Activated CD4-positive, alpha-beta T cell treated with anti-CD3 and anti-CD28 coated beads for 36 hours (primary cell): ENCODE measurements at regions of chr20 and their contacts with region 1.

Region 1: GRCh38 chr20:35490736-35491181 is 35.4 kb downstream of the CEP250 start:
- DNase-seq: peak; percentile 72
- ATAC-seq: peak; percentile 96
- H3K4me3 Mint-ChIP-seq: peak overlapping the region; percentile 83
- H3K27ac Mint-ChIP-seq: peak overlapping the region; percentile 98
- H3K4me1 Mint-ChIP-seq: peaks cover 44% of the 10 kb centered on the region
- H3K27me3 Mint-ChIP-seq: no peaks in the 10 kb centered on the region

Region 2: DNA sequence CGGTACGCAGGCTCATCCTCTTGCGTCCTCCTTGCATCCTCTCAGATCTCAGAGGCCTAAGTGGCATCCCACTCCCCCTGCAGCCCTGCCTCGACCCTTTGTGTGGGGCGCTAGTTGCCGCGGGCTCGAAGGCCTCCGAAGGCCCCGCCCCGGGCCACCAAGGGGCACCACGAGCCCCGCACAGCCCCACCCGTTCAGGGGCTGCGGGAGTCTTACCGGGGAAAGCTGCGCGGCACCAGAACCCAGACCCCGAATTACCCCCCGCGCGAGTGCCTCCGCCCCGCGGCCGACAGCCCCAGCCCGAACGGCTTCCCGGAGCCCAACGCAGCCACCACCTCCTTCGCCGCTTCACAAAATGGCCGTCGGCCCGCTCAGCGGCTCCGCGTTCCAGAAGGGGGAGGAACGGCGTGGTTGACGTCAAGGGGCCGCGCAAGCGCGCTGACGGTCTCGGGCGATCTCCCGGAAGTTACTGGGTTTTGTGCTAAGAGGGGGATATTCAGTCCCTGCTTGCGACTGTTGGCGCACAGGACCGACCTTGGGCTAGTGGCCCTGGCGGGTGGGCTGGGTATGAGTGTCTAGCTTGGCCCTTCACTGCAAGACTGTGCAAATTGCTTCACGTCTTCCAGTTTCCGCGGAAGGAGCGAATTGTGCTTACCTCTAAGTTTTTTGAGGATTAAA is 173.9 kb after region 1 on chr20 and contains the starts of genes CPNE1 and RBM12:
- CTCF ChIA-PET with region 1: no interaction called
- POLR2A ChIA-PET with region 1: interaction called, 9 read pairs
- intact Hi-C with region 1: loop called in 1 of 2 experiments (anchors 5 kb)
- DNase-seq: peak; percentile 96
- ATAC-seq: peak; percentile 68
- H3K4me3 Mint-ChIP-seq: peak within 1 kb of the TSS; percentile 80
- H3K27ac Mint-ChIP-seq: peak within 1 kb of the TSS; percentile 100
- H3K4me1 Mint-ChIP-seq: peaks cover 36% of the 10 kb centered on the region
- H3K27me3 Mint-ChIP-seq: no peaks in the 10 kb centered on the region
- total RNA-seq, gene CPNE1: 249 to 258 TPM
- total RNA-seq, gene RBM12: 122 to 148 TPM